Activated CD4-positive, alpha-beta T cell treated with anti-CD3 and anti-CD28 coated beads for 36 hours (primary cell): ENCODE measurements at regions of chr7 and their contacts with region 1.

Region 1: GRCh38 chr7:70693686-70694360 is 438.1 kb upstream of the GALNT17 start:
- DNase-seq: peak; percentile 61
- ATAC-seq: peak; percentile 68
- H3K4me3 Mint-ChIP-seq: peak overlapping the region; percentile 59
- H3K27ac Mint-ChIP-seq: no peak overlapping the region
- H3K4me1 Mint-ChIP-seq: peaks cover 12% of the 10 kb centered on the region
- H3K27me3 Mint-ChIP-seq: peaks cover 38% of the 10 kb centered on the region

Region 2: DNA sequence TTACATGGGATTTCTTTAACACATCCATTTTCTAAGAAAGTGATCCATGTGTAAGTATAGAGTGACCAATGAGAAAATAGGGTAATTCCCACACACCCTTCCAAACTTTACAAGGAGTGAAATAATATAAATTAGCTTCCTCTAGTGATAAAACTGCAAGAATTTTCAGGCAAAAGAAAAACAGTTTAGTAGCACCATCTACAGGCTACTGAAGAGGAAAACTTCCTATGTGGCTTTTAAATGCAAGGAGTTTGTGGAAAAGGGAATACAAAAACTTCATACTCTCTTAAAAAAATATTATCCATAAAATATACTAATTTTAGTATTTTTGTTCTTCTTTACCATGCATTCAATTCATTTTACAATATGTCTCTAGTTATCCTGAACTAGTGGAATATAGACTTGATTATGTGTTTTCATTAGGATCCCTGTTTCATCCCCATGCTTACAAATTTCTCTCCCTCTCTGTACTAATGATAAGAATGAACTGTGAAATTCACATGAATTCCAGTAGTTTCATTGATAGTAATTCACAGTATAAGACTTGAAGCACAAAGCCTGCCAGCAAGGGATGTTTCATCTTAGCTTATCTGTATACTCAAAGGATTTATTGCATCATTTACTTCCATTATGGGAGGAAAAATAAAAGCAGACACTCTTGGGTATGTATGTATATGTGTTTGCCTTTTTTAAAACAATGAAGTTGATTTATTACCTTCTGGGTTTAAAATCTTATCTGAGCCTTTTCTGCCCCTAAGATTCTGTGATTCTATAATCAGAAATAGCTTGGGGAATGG is 652.7 kb before region 1 on chr7:
- CTCF ChIA-PET with region 1: no interaction called
- POLR2A ChIA-PET with region 1: no interaction called
- intact Hi-C with region 1: loop called in 1 of 2 experiments (anchors 10 kb)
- DNase-seq: no peak
- ATAC-seq: no peak
- H3K4me3 Mint-ChIP-seq: no peak overlapping the region
- H3K27ac Mint-ChIP-seq: no peak overlapping the region
- H3K4me1 Mint-ChIP-seq: no peaks in the 10 kb centered on the region
- H3K27me3 Mint-ChIP-seq: no peaks in the 10 kb centered on the region

Region 3: DNA sequence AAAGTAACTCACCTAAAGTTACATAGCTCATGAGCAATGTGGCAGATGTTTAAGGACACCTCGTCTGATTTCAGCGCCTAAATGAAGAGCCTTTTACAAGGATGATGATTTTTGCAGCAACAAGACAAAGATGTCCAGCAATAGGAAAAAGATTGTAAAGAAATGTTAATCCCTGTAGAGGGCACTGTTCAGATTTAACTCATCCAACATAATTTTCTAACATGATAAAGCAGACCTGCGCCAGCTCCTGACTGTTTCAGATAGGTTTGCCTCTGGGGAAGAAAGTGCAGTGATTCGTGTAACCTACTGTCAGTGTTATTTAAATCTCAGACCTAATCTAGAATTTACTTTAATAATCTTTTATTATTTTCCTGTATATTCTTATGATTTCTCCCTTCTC is 500.3 kb before region 1 on chr7:
- CTCF ChIA-PET with region 1: interaction called, 4 read pairs
- POLR2A ChIA-PET with region 1: no interaction called
- intact Hi-C with region 1: loop called in 1 of 2 experiments (anchors 5 kb)
- DNase-seq: no peak
- ATAC-seq: no peak
- H3K4me3 Mint-ChIP-seq: no peak overlapping the region
- H3K27ac Mint-ChIP-seq: no peak overlapping the region
- H3K4me1 Mint-ChIP-seq: no peaks in the 10 kb centered on the region
- H3K27me3 Mint-ChIP-seq: no peaks in the 10 kb centered on the region

Region 4: DNA sequence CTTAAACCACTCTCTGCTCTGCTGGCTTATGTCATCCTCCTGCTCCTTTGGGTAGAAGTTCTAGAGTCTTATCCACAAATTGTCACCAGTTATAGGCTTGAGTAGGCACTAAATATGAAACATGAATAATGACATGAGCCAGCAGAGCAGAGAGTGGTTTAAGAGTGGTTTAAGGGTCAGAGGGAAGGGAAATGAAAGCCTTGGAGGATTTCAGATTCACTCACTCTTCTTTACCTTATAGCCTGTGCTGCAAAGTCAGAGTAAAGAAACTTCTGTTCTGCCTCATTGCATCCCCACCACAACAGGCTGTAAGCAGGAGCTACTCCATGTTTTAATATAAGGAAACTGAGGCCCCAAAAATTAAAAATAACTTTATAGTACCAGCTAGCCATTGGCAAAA is 345.9 kb before region 1 on chr7:
- CTCF ChIA-PET with region 1: no interaction called
- POLR2A ChIA-PET with region 1: no interaction called
- intact Hi-C with region 1: loop called in 1 of 2 experiments (anchors 10 kb)
- DNase-seq: no peak
- ATAC-seq: peak; percentile 77
- H3K4me3 Mint-ChIP-seq: no peak overlapping the region
- H3K27ac Mint-ChIP-seq: no peak overlapping the region
- H3K4me1 Mint-ChIP-seq: peaks cover 14% of the 10 kb centered on the region
- H3K27me3 Mint-ChIP-seq: no peaks in the 10 kb centered on the region

Region 5: GRCh38 chr7:70520611-70521010 is 173.2 kb before region 1 on chr7:
- CTCF ChIA-PET with region 1: no interaction called
- POLR2A ChIA-PET with region 1: no interaction called
- intact Hi-C with region 1: loop called in 1 of 2 experiments (anchors 10 kb)
- DNase-seq: no peak
- ATAC-seq: no peak
- H3K4me3 Mint-ChIP-seq: no peak overlapping the region
- H3K27ac Mint-ChIP-seq: no peak overlapping the region
- H3K4me1 Mint-ChIP-seq: no peaks in the 10 kb centered on the region
- H3K27me3 Mint-ChIP-seq: no peaks in the 10 kb centered on the region

Region 6: DNA sequence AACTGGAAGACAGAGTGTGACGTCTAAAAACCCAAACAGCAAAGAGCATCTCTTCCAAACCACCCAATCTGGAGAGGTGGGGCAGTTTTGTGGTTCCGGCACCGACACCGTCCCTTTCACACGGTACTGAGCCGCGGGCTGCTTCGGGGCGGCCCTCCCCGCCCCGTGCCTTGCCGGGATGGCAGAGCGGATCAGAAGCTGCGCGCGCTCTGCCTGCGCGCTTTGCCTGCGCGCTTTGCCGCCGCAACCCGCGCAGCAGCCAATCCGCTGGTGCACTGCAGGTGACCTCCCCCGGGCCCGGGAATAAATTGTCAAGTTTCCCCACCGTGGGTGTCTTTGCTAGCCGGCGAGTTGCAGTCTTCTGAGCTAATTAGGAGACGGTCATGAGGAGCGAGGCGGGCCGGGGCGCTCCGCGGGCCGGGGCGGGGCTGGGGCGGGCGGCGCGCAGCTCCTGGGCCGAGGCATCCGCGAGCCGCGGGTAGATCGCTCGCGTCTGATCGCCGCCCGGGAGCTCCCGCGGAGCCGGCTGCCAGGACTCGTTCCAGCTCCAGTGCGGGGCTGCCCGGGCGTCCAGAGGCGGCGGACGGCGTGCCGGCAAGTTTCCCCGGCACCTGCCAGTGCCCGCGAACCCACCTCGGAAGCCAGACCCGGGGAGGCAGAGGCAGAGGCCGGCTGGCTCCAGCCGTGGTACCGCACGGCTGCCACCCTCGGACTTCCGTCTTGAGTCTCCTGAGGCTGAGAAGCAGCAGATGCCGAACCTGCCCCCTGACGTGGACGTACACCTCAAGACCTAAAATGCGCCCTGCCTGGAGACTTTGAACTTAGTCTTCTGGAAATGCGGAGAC is 97.8 kb before region 1 on chr7:
- CTCF ChIA-PET with region 1: interaction called, 3 read pairs
- POLR2A ChIA-PET with region 1: interaction called, 3 read pairs
- intact Hi-C with region 1: loop called (anchors 5 to 10 kb)
- DNase-seq: peak; percentile 35
- ATAC-seq: peak; percentile 64
- H3K4me3 Mint-ChIP-seq: no peak overlapping the region
- H3K27ac Mint-ChIP-seq: no peak overlapping the region
- H3K4me1 Mint-ChIP-seq: peaks cover 4% of the 10 kb centered on the region
- H3K27me3 Mint-ChIP-seq: peaks cover 36% of the 10 kb centered on the region

Region 7: DNA sequence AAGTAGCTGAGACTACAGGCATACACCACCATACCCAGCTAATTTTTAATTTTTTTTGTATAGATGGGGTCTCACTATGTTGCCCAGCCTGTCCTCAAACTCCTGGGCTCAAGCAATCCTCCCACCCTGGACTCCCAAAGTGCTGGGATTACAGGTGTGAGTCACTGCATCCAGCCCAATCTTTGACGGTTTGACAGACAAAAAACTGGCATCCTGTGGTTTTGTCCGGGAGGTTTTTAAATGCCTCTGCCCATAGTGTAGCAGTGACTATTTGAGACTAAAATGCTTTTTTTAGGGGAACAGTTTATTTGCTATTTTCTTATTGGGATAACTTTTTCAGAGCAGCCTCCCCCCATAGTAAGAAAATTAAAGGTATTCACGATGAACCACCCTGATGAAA is 85.6 kb before region 1 on chr7:
- CTCF ChIA-PET with region 1: no interaction called
- POLR2A ChIA-PET with region 1: no interaction called
- intact Hi-C with region 1: no loop called
- DNase-seq: no peak
- ATAC-seq: no peak
- H3K4me3 Mint-ChIP-seq: no peak overlapping the region
- H3K27ac Mint-ChIP-seq: no peak overlapping the region
- H3K4me1 Mint-ChIP-seq: no peaks in the 10 kb centered on the region
- H3K27me3 Mint-ChIP-seq: no peaks in the 10 kb centered on the region

Region 8: GRCh38 chr7:70647801-70648498 is 45.9 kb before region 1 on chr7:
- CTCF ChIA-PET with region 1: interaction called, 5 read pairs
- POLR2A ChIA-PET with region 1: no interaction called
- intact Hi-C with region 1: loop called in 1 of 2 experiments (anchors 1 kb)
- DNase-seq: peak; percentile 91
- ATAC-seq: peak; percentile 94
- H3K4me3 Mint-ChIP-seq: no peak overlapping the region
- H3K27ac Mint-ChIP-seq: no peak overlapping the region
- H3K4me1 Mint-ChIP-seq: peaks cover 22% of the 10 kb centered on the region
- H3K27me3 Mint-ChIP-seq: peaks cover 14% of the 10 kb centered on the region

Region 9: GRCh38 chr7:71042564-71042963 is 348.7 kb after region 1 on chr7:
- CTCF ChIA-PET with region 1: no interaction called
- POLR2A ChIA-PET with region 1: no interaction called
- intact Hi-C with region 1: no loop called
- DNase-seq: no peak
- ATAC-seq: no peak
- H3K4me3 Mint-ChIP-seq: no peak overlapping the region
- H3K27ac Mint-ChIP-seq: no peak overlapping the region
- H3K4me1 Mint-ChIP-seq: no peaks in the 10 kb centered on the region
- H3K27me3 Mint-ChIP-seq: no peaks in the 10 kb centered on the region